Activated CD4-positive, alpha-beta memory T cell treated with anti-CD3 and anti-CD28 coated beads for 36 hours (primary cell): ENCODE measurements at regions of chr18 and their contacts with region 1.

Region 1: GRCh38 chr18:10787293-10787901 is 261.6 kb downstream of the NAPG start:
- DNase-seq: peak; percentile 89
- H3K4me3 Mint-ChIP-seq: no peak overlapping the region
- H3K27ac Mint-ChIP-seq: no peak overlapping the region
- H3K4me1 Mint-ChIP-seq: peaks cover 2% of the 10 kb centered on the region
- H3K27me3 Mint-ChIP-seq: peaks cover 30% of the 10 kb centered on the region

Region 2: DNA sequence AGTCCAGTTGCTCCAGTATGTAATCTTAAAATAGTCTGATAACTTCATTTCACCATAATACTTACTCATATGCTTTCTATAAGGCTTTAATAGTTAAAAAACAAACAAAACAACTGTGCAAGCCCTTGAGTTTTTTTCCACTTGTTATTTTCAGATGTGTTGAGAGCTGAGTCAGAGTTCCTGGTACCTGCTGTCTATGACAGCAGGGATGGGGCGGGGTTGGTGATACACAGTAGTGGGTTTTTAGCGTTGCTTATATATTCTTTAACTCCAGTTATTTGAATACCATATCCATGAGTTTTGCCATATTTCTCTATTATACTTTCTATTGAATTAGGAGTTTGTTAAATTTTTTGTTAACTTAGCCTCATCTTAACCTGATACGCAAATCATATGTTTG is 256.5 kb before region 1 on chr18:
- CTCF ChIA-PET with region 1: no interaction called
- POLR2A ChIA-PET with region 1: no interaction called
- intact Hi-C with region 1: loop called (anchors 10 kb)
- DNase-seq: peak; percentile 66
- H3K4me3 Mint-ChIP-seq: peak overlapping the region; percentile 46
- H3K27ac Mint-ChIP-seq: peak overlapping the region; percentile 96
- H3K4me1 Mint-ChIP-seq: peaks cover 42% of the 10 kb centered on the region
- H3K27me3 Mint-ChIP-seq: no peaks in the 10 kb centered on the region

Region 3: DNA sequence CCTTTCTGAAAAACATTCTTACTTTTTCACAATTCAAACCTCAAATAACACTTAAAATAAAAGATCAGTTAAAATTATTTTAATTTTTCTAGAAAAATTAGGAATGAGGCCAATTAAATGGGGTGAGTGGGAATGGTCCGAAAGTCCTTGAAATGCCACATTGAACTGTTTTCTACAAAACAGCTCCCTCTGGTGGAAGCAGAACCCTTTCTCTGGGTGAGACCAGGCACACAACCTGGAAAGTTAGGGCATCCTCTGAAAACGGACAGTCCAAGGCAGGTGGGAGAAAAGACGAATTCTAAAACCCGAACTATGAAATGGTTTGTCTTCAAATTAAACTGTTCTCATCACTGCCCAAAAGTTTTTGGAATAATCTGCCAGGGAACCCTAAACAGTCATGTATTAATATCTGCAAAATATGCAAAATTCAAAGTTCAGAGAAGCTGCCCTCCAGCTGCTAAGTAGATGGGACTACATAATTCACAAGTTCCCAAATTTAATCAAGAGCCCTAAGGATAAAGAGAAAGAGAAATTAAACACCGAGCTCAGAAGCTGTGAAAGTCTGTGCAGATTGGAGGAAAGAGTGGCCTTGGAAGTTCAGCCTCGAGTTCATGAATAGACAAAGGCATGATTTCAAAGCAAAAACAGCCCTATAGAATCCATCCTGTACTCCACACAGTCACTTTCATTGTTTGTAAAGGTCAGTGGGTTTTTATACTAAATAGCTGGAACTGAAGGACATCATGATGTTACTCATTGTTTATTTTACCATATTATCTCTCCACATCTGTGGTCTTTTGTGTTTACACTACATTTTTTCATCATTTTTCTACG is 253.6 kb after region 1 on chr18:
- CTCF ChIA-PET with region 1: no interaction called
- POLR2A ChIA-PET with region 1: no interaction called
- intact Hi-C with region 1: loop called (anchors 1 kb)
- DNase-seq: peak; percentile 10
- H3K4me3 Mint-ChIP-seq: no peak overlapping the region
- H3K27ac Mint-ChIP-seq: no peak overlapping the region
- H3K4me1 Mint-ChIP-seq: no peaks in the 10 kb centered on the region
- H3K27me3 Mint-ChIP-seq: peaks cover 6% of the 10 kb centered on the region